Right cardiac atrium (tissue), 5 donors: ENCODE measurements at regions of chr13 and their contacts with region 1.

Region 1: GRCh38 chr13:38763439-38764381 is 76.8 kb downstream of the FREM2 start:
- DNase-seq: no peak
- ATAC-seq: no peak
- H3K4me3 ChIP-seq: no peak overlapping the region
- H3K27ac ChIP-seq: no peak overlapping the region
- H3K4me1 ChIP-seq: no peaks in the 10 kb centered on the region
- H3K27me3 ChIP-seq: no peaks in the 10 kb centered on the region

Region 2: GRCh38 chr13:38308736-38309135 is 455.0 kb before region 1 on chr13:
- intact Hi-C with region 1: no loop called
- DNase-seq: no peak
- ATAC-seq: no peak
- H3K4me3 ChIP-seq: no peak overlapping the region
- H3K27ac ChIP-seq: no peak overlapping the region
- H3K4me1 ChIP-seq: no peaks in the 10 kb centered on the region
- H3K27me3 ChIP-seq: no peaks in the 10 kb centered on the region

Region 3: GRCh38 chr13:38473305-38473704 is 290.4 kb before region 1 on chr13:
- intact Hi-C with region 1: no loop called
- DNase-seq: no peak
- ATAC-seq: no peak
- H3K4me3 ChIP-seq: no peak overlapping the region
- H3K27ac ChIP-seq: no peak overlapping the region
- H3K4me1 ChIP-seq: no peaks in the 10 kb centered on the region
- H3K27me3 ChIP-seq: no peaks in the 10 kb centered on the region

Region 4: DNA sequence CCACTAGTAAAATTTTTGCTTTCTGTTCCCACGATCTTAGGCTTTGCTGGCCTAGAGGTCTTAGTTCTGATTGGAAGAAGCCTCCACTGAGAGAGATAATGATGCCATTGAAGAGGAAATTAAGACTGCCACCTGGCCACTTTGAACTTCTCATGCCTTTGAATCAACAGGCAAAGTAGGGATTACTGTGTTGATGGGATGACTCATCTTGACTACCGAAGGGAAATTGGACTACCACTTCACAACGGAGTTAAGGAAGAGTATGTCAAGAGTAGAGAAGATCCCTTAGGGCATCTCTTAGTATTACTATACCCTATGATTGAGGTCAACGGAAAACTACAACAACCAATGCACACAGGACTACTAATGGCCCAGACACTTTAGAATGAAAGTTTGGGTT is 89.5 kb before region 1 on chr13:
- intact Hi-C with region 1: no loop called
- DNase-seq: no peak
- ATAC-seq: no peak
- H3K4me3 ChIP-seq: no peak overlapping the region
- H3K27ac ChIP-seq: no peak overlapping the region
- H3K4me1 ChIP-seq: no peaks in the 10 kb centered on the region
- H3K27me3 ChIP-seq: no peaks in the 10 kb centered on the region

Region 5: GRCh38 chr13:38686577-38687245 is 77.0 kb before region 1 on chr13 and contains the start of gene FREM2:
- intact Hi-C with region 1: loop called in 2 of 4 experiments (anchors 5 kb)
- DNase-seq: peak in 2 of 3 donors; percentile 28 to 42
- ATAC-seq: peak; percentile 38 to 62
- H3K4me3 ChIP-seq: peak within 1 kb of the TSS; percentile 43
- H3K27ac ChIP-seq: no peak within 1 kb of the TSS
- H3K4me1 ChIP-seq: no peaks in the 10 kb centered on the region
- H3K27me3 ChIP-seq: peaks cover 3% of the 10 kb centered on the region
- total RNA-seq, gene FREM2: under 0.01 to 0.03 (median 0.03) TPM in 3 of 4 donors, not detected in the other